Left ventricle myocardium superior (tissue), 1 donor: ENCODE measurements at regions of chr14 and their contacts with region 1.

Region 1: GRCh38 chr14:96424109-96424989 is 32.4 kb downstream of the AK7 start:
- DNase-seq: peak; percentile 36
- ATAC-seq: peak; percentile 87

Region 2: GRCh38 chr14:96275177-96276112 is 148.9 kb before region 1 on chr14:
- intact Hi-C with region 1: no loop called
- DNase-seq: peak; percentile 81
- ATAC-seq: peak; percentile 53

Region 3: DNA sequence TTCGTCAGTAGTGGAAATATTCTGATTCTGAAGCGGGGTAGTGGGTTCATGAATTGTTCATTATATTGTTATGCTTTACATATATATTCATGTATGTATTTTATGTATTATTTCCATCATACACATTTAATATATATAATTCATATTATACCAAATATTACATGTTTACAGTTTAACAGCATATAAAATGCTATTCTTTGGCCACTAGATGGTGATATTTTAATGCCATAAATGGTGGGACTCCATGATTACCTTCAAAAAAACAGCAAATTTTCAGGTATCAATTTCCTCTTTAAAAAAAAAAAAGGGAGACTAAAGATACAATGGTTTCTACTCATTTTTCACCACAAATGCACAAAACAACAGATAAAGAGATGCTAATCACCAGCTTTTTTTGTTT is 127.3 kb before region 1 on chr14:
- intact Hi-C with region 1: loop called (anchors 5 kb)
- DNase-seq: no peak
- ATAC-seq: no peak

Region 4: DNA sequence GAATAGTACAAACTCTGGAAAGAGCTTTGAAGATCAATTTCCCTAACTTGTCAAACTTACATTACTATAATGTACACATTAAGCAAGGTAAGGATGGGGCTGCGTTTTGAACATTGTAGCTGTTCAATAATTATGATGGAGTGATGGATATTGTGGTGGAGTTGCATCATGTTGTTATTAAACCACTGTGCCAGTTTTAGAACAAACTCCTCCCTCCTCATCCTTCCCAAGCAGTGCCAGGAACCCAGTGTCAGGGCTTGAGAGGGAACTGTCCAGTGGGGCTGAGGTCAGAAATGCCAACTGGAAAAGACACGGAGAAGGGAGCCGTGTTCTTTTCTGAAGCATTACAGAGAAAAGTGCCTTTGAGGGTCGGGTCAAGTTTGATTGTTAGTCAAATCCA is 46.0 kb after region 1 on chr14:
- intact Hi-C with region 1: no loop called
- DNase-seq: no peak
- ATAC-seq: peak; percentile 26